ENCODE measurements at regions of chr6 and their contacts with region 1.

Region 1: DNA sequence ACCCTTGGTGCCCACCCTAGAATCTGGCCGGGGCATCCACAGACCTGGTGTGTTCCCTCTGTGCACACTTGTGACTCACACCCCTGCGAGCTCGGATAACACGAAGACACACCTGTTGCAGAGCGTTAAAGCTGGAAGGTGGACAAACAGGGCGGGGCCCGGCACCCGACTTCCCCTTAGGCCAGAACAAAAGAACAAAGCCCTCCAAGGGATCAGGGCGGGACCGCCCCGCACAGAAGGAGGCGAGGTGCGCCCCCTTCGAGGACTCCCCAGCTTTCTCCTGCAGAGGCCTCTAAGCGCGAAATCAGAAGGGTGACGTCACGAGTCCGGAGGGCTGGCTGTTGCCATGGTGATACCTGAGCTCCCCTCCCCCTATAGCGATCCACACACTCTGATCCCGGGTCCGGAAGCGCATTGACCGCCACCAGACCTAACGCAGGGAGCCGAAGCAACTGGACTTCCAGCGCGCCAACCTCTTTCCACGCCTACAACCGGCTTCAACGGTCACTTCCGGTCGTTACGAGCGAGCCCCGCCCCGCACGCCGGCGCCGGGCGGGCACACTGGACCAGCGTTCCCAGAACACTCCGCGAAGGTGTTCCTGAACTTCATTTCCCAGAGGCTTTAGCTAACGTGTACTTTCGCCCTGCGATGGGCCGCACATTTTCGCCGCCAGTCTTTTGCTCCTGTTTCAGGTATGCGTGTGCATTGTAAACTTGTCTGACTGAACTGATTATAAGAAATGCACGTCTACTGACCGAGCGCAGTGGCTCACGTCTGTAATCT is at the start of gene ZNF184:
- DNase-seq: peak; percentile 95
- ATAC-seq: peak; percentile 98
- H3K4me3 ChIP-seq: peak within 1 kb of the TSS; percentile 91 to 92
- H3K27ac ChIP-seq: peak within 1 kb of the TSS; percentile 93
- H3K4me1 ChIP-seq: peaks cover 7% of the 10 kb centered on the region
- H3K27me3 ChIP-seq: no peaks in the 10 kb centered on the region
- CTCF ChIP-seq: no peak; the same call in 1 of the 2 replicates
- total RNA-seq, gene ZNF184: 7.8 TPM

Region 2: DNA sequence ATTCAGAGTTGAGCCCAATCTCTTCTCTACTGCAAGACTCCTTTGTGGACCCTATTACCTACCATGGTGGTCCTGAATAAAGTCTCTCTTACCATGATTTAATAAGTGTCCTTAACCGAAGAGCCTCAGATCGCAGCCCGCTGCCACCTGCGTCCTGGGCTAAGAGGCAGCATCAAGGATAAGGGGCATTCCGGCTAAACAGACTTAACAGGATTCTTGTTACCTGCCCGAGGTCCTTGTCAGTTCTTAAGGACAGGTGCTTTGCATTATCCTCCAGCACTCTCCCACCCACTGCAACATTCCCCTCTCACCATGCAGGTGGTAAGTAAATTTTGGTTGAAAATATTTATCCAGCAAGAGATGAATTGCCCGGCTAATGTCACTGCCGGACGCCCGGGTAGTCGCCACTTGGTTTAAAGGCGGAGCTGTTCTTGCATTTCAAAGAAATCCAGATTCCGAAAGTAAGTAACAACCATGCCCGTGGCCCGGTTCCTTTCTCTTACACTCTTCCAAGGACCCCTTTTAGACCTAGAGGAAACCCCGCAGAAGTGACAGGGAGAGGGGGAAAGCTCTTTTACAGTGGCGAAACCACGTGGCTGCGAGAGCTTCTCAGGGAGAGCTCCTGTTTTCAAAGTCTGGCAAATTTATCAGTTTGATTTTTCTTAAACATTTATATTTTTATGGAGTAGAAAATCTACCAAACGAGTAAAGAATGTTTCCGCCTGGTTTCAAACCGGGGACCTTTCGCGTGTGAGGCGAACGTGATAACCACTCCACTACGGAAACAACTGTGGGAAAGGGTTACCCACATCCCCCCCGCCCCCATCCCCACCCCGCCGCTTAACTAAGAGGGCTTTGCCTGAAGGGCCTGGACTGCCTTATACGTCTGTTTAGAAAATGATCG is 267.2 kb before region 1 on chr6:
- CTCF ChIA-PET with region 1: no interaction called
- POLR2A ChIA-PET with region 1: no interaction called
- in situ Hi-C with region 1: no loop called
- intact Hi-C with region 1: no loop called
- DNase-seq: no peak
- ATAC-seq: peak; percentile 62
- H3K4me3 ChIP-seq: peak overlapping the region; percentile 33 to 52
- H3K27ac ChIP-seq: peak overlapping the region; percentile 26; the same call in 1 of the 2 replicates
- H3K4me1 ChIP-seq: peaks cover 3% of the 10 kb centered on the region; the same call in 1 of the 2 replicates
- H3K27me3 ChIP-seq: no peaks in the 10 kb centered on the region
- CTCF ChIP-seq: no peak

Region 3: DNA sequence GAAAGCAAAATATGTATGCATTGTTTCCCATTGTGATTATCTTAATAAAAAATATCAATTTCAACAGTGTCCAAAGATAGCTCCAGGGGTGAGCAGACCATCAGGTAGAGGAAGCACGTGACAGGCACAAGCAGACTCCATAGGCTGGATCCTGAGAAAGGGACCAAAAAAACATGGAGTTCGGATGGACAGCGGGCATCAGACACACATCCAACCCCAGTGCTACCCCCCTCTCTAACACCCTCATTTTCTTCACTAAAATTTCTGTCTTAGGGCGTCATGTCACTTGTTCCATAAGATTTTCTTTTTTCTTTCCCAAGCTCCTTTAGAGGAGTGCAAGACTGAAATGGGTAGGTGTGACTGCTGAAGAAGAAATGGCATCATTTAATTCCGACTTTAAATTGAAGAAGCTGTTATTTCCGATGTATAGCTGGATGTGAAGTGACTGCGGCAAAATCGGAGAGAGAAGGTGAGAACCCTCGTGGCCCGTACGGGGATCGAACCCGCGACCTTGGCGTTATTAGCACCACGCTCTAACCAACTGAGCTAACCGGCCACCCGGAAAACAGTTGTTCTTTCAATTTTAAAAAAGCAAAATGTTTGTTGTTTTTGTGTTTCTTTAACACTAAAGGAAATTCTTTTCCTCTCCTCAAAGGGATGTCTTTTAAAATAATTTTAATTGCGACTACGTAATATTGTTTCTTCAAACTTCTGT is 235.6 kb before region 1 on chr6:
- CTCF ChIA-PET with region 1: no interaction called
- POLR2A ChIA-PET with region 1: no interaction called
- in situ Hi-C with region 1: no loop called
- intact Hi-C with region 1: loop called (anchors 10 kb)
- DNase-seq: peak; percentile 91
- ATAC-seq: peak; percentile 85
- H3K4me3 ChIP-seq: peak overlapping the region; percentile 67 to 75
- H3K27ac ChIP-seq: peak overlapping the region; percentile 77
- H3K4me1 ChIP-seq: peaks cover 13% of the 10 kb centered on the region
- H3K27me3 ChIP-seq: no peaks in the 10 kb centered on the region; the same call in 1 of the 2 replicates
- CTCF ChIP-seq: no peak

Region 4: GRCh38 chr6:27332692-27333641 is 139.8 kb before region 1 on chr6:
- CTCF ChIA-PET with region 1: no interaction called
- POLR2A ChIA-PET with region 1: no interaction called
- in situ Hi-C with region 1: no loop called
- intact Hi-C with region 1: loop called (anchors 5 kb)
- DNase-seq: peak; percentile 92
- ATAC-seq: peak; percentile 91
- H3K4me3 ChIP-seq: peak overlapping the region; percentile 75 to 87
- H3K27ac ChIP-seq: peak overlapping the region; percentile 37; the same call in 1 of the 2 replicates
- H3K4me1 ChIP-seq: no peaks in the 10 kb centered on the region
- H3K27me3 ChIP-seq: no peaks in the 10 kb centered on the region
- CTCF ChIP-seq: no peak

Measured in Panc1 (cell line).